ENCODE measurements at regions of chrX and their contacts with region 1.

Region 1: DNA sequence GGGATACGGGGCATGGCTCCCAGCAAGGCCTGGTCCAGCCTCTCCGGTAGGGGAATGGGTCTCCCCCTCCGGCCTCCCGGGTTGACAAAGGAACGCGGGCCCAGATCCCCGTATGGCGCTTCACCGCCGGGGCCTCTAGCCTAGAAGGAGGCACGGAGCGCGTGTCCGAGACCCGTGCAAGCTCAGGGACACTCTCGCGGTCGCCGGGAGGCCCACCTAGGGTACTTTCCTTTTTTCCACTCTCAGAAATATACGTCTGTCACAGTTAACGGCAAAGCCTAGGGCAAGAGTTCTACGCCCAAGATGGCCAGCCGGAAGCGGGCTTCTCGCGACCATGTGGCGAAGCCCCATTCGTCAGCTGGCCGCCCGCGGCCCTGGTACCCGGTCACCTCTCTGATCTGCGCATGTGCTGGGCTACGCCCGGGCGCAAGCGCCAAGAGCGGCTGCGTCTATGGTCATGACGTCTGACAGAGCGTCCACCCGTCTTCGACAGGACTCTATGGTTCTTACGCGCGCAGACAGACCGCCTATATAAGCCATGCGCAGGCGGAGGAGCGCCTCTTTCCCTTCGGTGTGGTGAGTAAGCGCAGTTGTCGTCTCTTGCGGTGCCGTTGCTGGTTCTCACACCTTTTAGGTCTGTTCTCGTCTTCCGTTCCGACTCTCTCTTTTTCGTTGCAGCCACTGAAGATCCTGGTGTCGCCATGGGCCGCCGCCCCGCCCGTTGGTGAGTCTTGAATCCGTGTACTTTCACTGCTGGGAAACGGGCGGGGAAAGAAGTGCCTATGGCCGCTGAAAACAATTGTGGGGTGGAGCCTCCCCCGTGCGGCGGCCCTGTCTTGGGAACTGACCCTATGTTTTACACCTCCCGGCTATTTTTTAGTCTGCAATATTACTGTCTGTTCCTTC is at the start of gene RPL10:
- DNase-seq: peak; percentile 76
- ATAC-seq: peak; percentile 75
- H3K4me3 Mint-ChIP-seq: peak within 1 kb of the TSS; percentile 97
- H3K27ac Mint-ChIP-seq: peak within 1 kb of the TSS; percentile 99
- H3K4me1 Mint-ChIP-seq: peaks cover 26% of the 10 kb centered on the region
- H3K27me3 Mint-ChIP-seq: no peaks in the 10 kb centered on the region
- CTCF ChIP-seq: no peak
- total RNA-seq, gene RPL10: 5,113 and 5,534 TPM in 2 replicates

Region 2: DNA sequence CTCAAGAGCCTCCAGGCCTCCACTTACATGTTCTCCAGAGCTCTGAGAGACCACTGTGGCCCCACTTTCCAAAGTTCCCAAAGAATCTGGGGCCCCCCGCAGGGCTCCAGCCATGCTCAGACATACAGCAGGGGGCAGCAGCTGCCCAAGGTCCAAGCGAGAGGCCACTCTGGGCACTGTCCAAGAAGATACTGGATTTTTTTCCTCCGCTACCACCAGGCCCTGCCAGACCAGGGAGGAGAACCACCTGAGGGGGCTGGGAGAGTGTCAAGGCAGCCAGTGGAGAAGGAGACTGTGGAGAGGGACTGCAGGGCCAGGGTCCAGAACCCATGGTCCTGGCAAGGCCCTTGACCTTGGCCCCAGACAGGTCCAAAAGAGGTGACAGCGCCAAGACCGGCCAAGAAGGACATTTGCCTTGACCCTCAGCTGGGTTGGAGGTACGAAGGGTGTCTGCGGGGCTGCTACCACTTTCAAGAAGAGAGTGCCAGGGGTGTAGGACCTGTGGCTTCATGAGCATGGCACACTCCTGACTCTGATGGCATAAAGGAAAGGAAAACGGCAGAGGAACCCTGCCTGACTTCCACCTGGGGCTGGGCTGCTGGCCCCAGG is 13.7 kb before region 1 on chrX:
- CTCF ChIA-PET with region 1: no interaction called
- POLR2A ChIA-PET with region 1: interaction called, 20 read pairs
- intact Hi-C with region 1: no loop called
- DNase-seq: no peak
- ATAC-seq: no peak
- H3K4me3 Mint-ChIP-seq: no peak overlapping the region
- H3K27ac Mint-ChIP-seq: no peak overlapping the region
- H3K4me1 Mint-ChIP-seq: peaks cover 18% of the 10 kb centered on the region
- H3K27me3 Mint-ChIP-seq: no peaks in the 10 kb centered on the region
- CTCF ChIP-seq: no peak

Region 3: GRCh38 chrX:154436983-154437719 is 39.1 kb after region 1 on chrX and contains the start of gene GDI1:
- CTCF ChIA-PET with region 1: no interaction called
- POLR2A ChIA-PET with region 1: interaction called, 6 read pairs
- intact Hi-C with region 1: loop called (anchors 5 kb)
- DNase-seq: peak; percentile 62
- ATAC-seq: peak; percentile 69
- H3K4me3 Mint-ChIP-seq: peak within 1 kb of the TSS; percentile 88
- H3K27ac Mint-ChIP-seq: peak within 1 kb of the TSS; percentile 86
- H3K4me1 Mint-ChIP-seq: peaks cover 22% of the 10 kb centered on the region
- H3K27me3 Mint-ChIP-seq: no peaks in the 10 kb centered on the region
- CTCF ChIP-seq: no peak
- total RNA-seq, gene GDI1: 112 and 127 TPM in 2 replicates

Region 4: DNA sequence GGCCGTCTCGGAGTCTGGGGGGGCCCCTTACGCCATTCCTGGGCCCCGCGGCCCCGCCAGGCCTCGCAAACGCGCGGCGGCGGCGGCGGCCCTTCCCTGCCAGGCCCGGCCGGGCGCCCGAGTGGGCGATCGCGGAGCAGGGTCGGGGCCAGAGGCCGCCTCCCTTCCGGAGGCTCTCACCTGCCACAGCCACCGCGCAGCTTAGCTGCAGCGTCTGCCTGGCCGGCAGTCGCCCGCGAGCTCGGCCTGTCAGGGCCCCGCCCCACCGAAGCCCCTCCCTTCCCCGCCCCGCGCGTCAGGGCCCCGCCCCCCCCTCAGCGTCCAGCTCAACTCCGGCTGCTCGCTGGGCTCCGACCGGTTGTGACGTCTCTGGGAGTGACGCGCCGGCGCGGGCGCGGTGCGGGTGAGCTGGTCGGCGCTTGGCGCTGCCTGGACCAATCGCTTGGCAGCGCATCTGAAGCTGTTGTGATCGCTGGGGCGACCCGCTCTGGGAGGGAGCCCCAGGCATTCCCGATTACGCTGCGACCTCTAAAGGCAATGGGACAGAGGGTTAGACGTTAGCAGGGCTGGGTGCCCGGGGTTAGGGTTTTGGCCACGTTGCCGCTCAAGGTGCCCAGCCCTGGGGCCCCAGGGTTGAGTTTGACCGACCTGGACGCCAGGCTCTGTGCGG is 92.5 kb after region 1 on chrX and contains the start of gene SLC10A3:
- CTCF ChIA-PET with region 1: no interaction called
- POLR2A ChIA-PET with region 1: interaction called, 32 read pairs
- intact Hi-C with region 1: loop called (anchors 5 kb)
- DNase-seq: peak; percentile 77
- ATAC-seq: peak; percentile 82
- H3K4me3 Mint-ChIP-seq: peak within 1 kb of the TSS; percentile 88
- H3K27ac Mint-ChIP-seq: peak within 1 kb of the TSS; percentile 93
- H3K4me1 Mint-ChIP-seq: peaks cover 10% of the 10 kb centered on the region
- H3K27me3 Mint-ChIP-seq: no peaks in the 10 kb centered on the region
- CTCF ChIP-seq: no peak
- total RNA-seq, gene SLC10A3: 13.4 and 17.1 TPM in 2 replicates

Region 5: DNA sequence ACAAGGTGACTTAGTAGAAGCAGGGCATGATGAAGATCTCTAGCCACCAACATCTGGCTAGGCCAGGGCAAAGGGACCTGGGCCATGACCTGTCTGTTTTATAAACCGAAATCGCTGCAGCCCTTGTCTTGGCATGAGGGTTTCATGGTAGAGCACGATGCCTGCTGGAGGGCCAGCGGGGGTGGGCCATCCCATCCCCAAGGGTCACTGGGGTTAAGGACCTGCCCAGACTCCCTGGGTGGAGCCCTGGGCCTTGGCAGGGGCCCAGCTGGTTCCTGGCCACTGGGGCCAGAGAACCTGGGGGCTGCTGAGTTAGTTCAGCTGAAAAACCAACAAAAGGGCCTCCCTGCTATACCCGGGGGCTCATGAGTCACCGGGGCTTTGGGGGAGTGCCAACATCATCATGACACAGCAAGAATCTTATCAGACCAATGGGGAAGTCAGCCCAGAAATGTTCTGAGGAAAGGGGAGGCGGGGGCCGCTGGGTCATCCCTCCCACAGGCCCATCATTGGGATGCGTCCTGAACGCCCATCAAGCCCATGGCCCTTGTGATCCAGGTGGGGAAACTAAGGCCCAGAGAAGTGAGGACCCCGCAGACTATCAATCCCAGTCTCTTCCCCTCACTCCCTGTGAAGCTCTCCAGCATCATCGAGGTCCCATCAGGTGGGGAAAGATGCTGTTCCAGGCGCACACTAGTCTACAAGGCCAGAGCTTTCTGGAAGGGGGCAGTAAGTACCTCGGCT is 143.8 kb after region 1 on chrX:
- CTCF ChIA-PET with region 1: no interaction called
- POLR2A ChIA-PET with region 1: interaction called, 20 read pairs
- intact Hi-C with region 1: no loop called
- DNase-seq: no peak
- ATAC-seq: peak; percentile 11
- H3K4me3 Mint-ChIP-seq: no peak overlapping the region
- H3K27ac Mint-ChIP-seq: peak overlapping the region; percentile 91
- H3K4me1 Mint-ChIP-seq: peaks cover 35% of the 10 kb centered on the region
- H3K27me3 Mint-ChIP-seq: no peaks in the 10 kb centered on the region
- CTCF ChIP-seq: no peak

Measured in activated B cell treated with CpG ODN at 0.5 μM for 24 hours (primary cell).